PC-3 (cell line): ENCODE measurements at regions of chr4 and their contacts with region 1.

Region 1: DNA sequence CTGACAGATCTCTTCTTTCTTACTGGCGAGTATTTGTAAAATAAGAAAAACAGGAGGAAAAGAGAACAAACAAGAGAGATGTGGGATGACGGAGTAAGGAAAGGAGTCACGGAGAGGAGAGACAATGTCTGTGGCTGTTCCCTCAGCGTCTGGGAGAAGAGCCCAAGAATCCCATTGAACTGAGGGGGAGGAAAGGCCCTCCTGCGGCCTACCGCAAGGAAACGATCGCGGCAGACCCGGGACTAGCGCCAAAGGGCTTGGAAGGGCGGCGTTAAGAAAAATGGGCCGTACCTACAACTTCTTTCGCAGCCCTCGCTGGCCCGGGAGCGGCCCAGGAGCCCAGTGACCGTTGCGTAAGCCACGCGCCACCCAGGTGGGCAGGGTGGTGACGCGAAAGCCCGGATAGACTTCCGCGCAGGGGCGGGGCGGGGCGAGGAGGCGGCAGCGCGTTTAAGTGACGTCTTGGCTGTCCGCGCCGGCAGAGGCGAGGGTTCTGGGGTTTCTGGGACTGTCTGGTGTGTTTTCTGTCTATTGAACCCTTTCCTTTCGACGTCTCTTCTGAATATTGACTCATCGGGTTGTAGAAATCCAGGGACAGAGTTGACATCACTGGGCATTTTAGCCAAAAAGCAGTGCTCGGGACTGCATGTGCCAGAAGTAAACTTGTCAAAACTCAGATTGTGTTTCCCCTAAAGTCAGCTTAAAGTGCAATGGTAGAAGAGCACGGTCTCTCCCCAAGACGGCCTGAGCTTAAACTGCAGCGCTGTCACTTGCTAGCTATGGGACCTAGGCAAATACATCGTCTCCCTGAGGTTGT is at the start of gene SLC9B1:
- DNase-seq: peak; percentile 95
- ATAC-seq: peak; percentile 99
- H3K4me3 ChIP-seq: peak within 1 kb of the TSS; percentile 62
- H3K27ac ChIP-seq: peak within 1 kb of the TSS; percentile 90
- H3K4me1 ChIP-seq: peaks cover 23% of the 10 kb centered on the region
- H3K27me3 ChIP-seq: no peaks in the 10 kb centered on the region
- CTCF ChIP-seq: no peak
- total RNA-seq, gene SLC9B1: not detected in 2 replicates

Region 2: GRCh38 chr4:102344954-102345794 is 674.3 kb before region 1 on chr4 and contains the start of gene SLC39A8:
- CTCF ChIA-PET with region 1: no interaction called
- POLR2A ChIA-PET with region 1: interaction called, 11 read pairs
- intact Hi-C with region 1: no loop called
- DNase-seq: peak; percentile 77
- ATAC-seq: peak; percentile 80
- H3K4me3 ChIP-seq: peak within 1 kb of the TSS; percentile 82
- H3K27ac ChIP-seq: peak within 1 kb of the TSS; percentile 23; the same call in 1 of the 2 replicates
- H3K4me1 ChIP-seq: peaks cover 5% of the 10 kb centered on the region; the same call in 1 of the 2 replicates
- H3K27me3 ChIP-seq: no peaks in the 10 kb centered on the region
- CTCF ChIP-seq: peak; percentile 65
- total RNA-seq, gene SLC39A8: 15.8 and 19.5 TPM in 2 replicates

Region 3: GRCh38 chr4:103075901-103076739 is 56.6 kb after region 1 on chr4:
- CTCF ChIA-PET with region 1: no interaction called
- POLR2A ChIA-PET with region 1: no interaction called
- intact Hi-C with region 1: loop called (anchors 2 kb)
- DNase-seq: peak; percentile 41
- ATAC-seq: peak; percentile 64
- H3K4me3 ChIP-seq: peak overlapping the region; percentile 88
- H3K27ac ChIP-seq: peak overlapping the region; percentile 73
- H3K4me1 ChIP-seq: peaks cover 30% of the 10 kb centered on the region
- H3K27me3 ChIP-seq: no peaks in the 10 kb centered on the region
- CTCF ChIP-seq: no peak

Region 4: DNA sequence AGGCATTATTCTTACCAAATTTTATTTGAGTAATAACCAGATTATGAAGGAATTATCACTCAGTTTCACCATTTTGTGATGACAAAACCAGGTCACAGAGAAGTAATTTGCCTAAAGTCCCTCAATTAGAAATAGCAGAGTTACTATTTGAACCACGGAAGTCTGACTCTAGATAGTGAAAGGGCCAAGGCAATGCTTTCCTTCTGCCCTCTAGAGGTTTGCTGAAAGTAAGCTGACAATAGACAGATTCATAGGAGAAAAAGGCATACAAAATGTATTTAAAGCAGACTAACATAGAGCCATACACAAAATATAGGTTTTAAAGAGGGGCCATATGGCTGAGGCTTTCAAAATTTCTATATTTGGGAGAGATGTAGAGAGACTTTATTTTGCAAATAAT is 1432.1 kb after region 1 on chr4:
- CTCF ChIA-PET with region 1: no interaction called
- POLR2A ChIA-PET with region 1: no interaction called
- intact Hi-C with region 1: no loop called
- DNase-seq: no peak
- ATAC-seq: no peak
- H3K4me3 ChIP-seq: no peak overlapping the region
- H3K27ac ChIP-seq: no peak overlapping the region
- H3K4me1 ChIP-seq: no peaks in the 10 kb centered on the region
- H3K27me3 ChIP-seq: no peaks in the 10 kb centered on the region
- CTCF ChIP-seq: peak; percentile 43